GM10248 (cell line): ENCODE measurements at regions of chr1 and their contacts with region 1.

Region 1: GRCh38 chr1:28642847-28643635 is at the start of gene TAF12:
- DNase-seq: peak; percentile 90
- CTCF ChIP-seq: peak; percentile 56

Region 2: GRCh38 chr1:28354121-28354520 is 288.9 kb before region 1 on chr1:
- CTCF ChIA-PET with region 1: no interaction called
- POLR2A ChIA-PET with region 1: no interaction called
- DNase-seq: no peak
- CTCF ChIP-seq: no peak

Region 3: GRCh38 chr1:28505406-28506187 is 137.4 kb before region 1 on chr1 and contains the start of gene RCC1:
- CTCF ChIA-PET with region 1: no interaction called
- POLR2A ChIA-PET with region 1: interaction called, 20 read pairs
- DNase-seq: peak; percentile 97
- CTCF ChIP-seq: no peak